Endothelial cell of umbilical vein (primary cell): ENCODE measurements at regions of chr21 and their contacts with region 1.

Region 1: GRCh38 chr21:38355992-38356797 is 99.4 kb downstream of the KCNJ15 start:
- DNase-seq: peak; percentile 70
- H3K4me3 ChIP-seq: no peak overlapping the region
- H3K27ac ChIP-seq: no peak overlapping the region
- H3K4me1 ChIP-seq: peaks cover 14% of the 10 kb centered on the region
- H3K27me3 ChIP-seq: peaks cover 0 to 2% of the 10 kb centered on the region in 2 experiments
- CTCF ChIP-seq: peak; percentile 95 to 97
- POLR2A ChIP-seq: no peak

Region 2: GRCh38 chr21:37675202-37675801 is 680.9 kb before region 1 on chr21:
- CTCF ChIA-PET with region 1: interaction called, 11 read pairs
- POLR2A ChIA-PET with region 1: no interaction called
- dilution Hi-C with region 1: no loop called
- intact Hi-C with region 1: no loop called
- DNase-seq: peak; percentile 48
- H3K4me3 ChIP-seq: no peak overlapping the region
- H3K27ac ChIP-seq: no peak overlapping the region
- H3K4me1 ChIP-seq: peaks cover 3% of the 10 kb centered on the region
- H3K27me3 ChIP-seq: peaks cover 4 to 13% of the 10 kb centered on the region in 2 experiments
- CTCF ChIP-seq: peak; percentile 95 to 96
- POLR2A ChIP-seq: no peak

Region 3: DNA sequence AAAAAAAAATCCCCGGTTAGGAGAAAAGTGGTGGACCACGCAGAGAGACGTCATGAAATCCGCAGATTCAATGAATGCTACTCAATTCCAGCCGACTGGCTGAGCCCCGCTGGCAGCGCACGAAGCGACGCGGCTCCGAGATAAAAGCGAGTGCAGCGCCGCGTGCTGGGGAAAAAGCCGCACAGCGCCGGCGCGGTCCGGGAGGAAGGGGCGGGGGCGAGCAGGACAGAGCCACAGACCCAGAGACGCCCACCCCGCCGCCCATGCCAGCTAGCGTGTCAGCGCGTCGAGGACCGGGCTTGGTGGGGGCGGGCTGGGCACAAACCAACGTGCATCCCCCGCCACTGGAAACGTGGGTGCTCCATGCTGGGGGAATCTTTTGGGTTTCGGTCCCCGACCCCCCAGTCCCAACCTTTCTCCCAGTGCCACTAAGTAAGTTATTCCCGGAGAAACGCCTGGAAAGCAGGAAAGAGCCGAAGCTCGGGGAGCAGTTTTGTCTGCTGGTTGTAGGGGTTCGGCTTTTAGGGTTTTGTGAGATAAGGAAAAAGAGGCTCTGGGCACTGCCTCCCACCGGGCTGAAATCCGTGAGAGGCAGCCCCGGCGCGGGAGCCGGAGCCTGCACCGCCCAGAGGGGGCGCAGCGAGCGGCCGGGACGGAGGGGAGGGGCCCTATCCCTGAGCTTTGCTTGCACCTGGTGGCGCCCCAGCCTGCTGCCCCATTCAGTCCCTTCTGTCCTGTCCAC is 439.7 kb before region 1 on chr21 and contains the start of gene KCNJ6:
- CTCF ChIA-PET with region 1: interaction called, 4 read pairs
- POLR2A ChIA-PET with region 1: no interaction called
- dilution Hi-C with region 1: no loop called
- intact Hi-C with region 1: loop called (anchors 10 kb)
- DNase-seq: peak; percentile 47
- H3K4me3 ChIP-seq: peak within 1 kb of the TSS in 1 of 3 experiments; percentile 20
- H3K27ac ChIP-seq: no peak within 1 kb of the TSS
- H3K4me1 ChIP-seq: no peaks in the 10 kb centered on the region
- H3K27me3 ChIP-seq: peaks cover 34 to 47% of the 10 kb centered on the region in 2 experiments
- CTCF ChIP-seq: peak; percentile 51 to 77
- POLR2A ChIP-seq: no peak
- total RNA-seq, gene KCNJ6: not detected in 2 replicates

Region 4: DNA sequence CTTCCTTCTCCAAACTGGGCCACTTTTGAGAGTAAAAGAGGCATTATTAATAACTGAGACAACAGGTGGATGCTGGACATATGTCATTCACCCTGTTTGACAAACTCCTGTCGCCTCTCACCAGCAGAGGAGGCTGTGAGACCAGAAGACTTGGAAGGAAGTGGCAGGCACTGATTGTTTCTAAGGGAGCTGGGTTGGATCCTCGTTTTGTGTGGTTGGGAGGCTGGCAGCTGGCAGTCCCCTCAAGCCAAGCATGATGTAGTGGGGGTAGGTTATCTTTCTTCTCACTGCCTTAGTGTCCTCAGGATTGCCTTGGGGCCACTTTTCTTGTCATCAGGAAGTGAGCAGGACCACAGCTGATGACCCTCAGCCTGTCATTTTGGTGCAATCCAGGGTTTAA is 185.9 kb before region 1 on chr21:
- CTCF ChIA-PET with region 1: interaction called, 740 read pairs
- POLR2A ChIA-PET with region 1: interaction called, 6 read pairs
- dilution Hi-C with region 1: loop called (anchors 10 kb)
- intact Hi-C with region 1: loop called (anchors 1 kb)
- DNase-seq: peak; percentile 66
- H3K4me3 ChIP-seq: no peak overlapping the region
- H3K27ac ChIP-seq: peak overlapping the region; percentile 84
- H3K4me1 ChIP-seq: peaks cover 36% of the 10 kb centered on the region
- H3K27me3 ChIP-seq: no peaks in the 10 kb centered on the region
- CTCF ChIP-seq: peak; percentile 67 to 68
- POLR2A ChIP-seq: no peak

Region 5: DNA sequence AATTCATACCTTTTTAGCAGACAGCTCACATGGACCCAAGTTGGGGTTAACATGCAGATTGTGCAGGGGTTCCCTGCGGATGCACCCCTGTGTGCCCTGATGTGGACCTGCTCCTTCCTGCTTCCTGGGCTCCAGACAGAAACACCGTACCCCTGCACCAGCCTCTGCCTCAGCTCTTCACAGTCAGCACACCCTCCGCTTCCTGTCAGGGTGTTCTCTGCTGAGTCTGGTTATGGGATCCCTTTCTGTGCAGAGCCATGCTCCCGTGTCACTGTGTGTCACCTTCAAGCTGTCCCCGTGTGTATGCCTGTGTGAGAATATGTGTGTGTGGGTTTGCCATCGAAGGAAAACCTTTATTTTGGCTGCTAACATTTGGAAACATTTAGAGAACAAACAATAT is 148.1 kb before region 1 on chr21:
- CTCF ChIA-PET with region 1: interaction called, 386 read pairs
- POLR2A ChIA-PET with region 1: no interaction called
- dilution Hi-C with region 1: no loop called
- intact Hi-C with region 1: no loop called
- DNase-seq: no peak
- H3K4me3 ChIP-seq: no peak overlapping the region
- H3K27ac ChIP-seq: no peak overlapping the region
- H3K4me1 ChIP-seq: no peaks in the 10 kb centered on the region
- H3K27me3 ChIP-seq: peaks cover 29 to 41% of the 10 kb centered on the region in 2 experiments
- CTCF ChIP-seq: no peak
- POLR2A ChIP-seq: no peak

Region 6: GRCh38 chr21:38236232-38236631 is 120.0 kb before region 1 on chr21:
- CTCF ChIA-PET with region 1: interaction called, 23 read pairs
- POLR2A ChIA-PET with region 1: no interaction called
- dilution Hi-C with region 1: no loop called
- intact Hi-C with region 1: loop called (anchors 1 kb)
- DNase-seq: no peak
- H3K4me3 ChIP-seq: no peak overlapping the region
- H3K27ac ChIP-seq: no peak overlapping the region
- H3K4me1 ChIP-seq: peaks cover 16% of the 10 kb centered on the region
- H3K27me3 ChIP-seq: no peaks in the 10 kb centered on the region
- CTCF ChIP-seq: peak in 1 of 2 donors; percentile 3
- POLR2A ChIP-seq: no peak

Region 7: GRCh38 chr21:38333301-38334272 is 22.6 kb before region 1 on chr21:
- CTCF ChIA-PET with region 1: interaction called, 10 read pairs
- POLR2A ChIA-PET with region 1: no interaction called
- dilution Hi-C with region 1: no loop called
- intact Hi-C with region 1: no loop called
- DNase-seq: no peak
- H3K4me3 ChIP-seq: no peak overlapping the region
- H3K27ac ChIP-seq: no peak overlapping the region
- H3K4me1 ChIP-seq: no peaks in the 10 kb centered on the region
- H3K27me3 ChIP-seq: no peaks in the 10 kb centered on the region
- CTCF ChIP-seq: peak; percentile 10 to 17
- POLR2A ChIP-seq: no peak